ENCODE measurements at regions of chr4 and their contacts with region 1.

Region 1: DNA sequence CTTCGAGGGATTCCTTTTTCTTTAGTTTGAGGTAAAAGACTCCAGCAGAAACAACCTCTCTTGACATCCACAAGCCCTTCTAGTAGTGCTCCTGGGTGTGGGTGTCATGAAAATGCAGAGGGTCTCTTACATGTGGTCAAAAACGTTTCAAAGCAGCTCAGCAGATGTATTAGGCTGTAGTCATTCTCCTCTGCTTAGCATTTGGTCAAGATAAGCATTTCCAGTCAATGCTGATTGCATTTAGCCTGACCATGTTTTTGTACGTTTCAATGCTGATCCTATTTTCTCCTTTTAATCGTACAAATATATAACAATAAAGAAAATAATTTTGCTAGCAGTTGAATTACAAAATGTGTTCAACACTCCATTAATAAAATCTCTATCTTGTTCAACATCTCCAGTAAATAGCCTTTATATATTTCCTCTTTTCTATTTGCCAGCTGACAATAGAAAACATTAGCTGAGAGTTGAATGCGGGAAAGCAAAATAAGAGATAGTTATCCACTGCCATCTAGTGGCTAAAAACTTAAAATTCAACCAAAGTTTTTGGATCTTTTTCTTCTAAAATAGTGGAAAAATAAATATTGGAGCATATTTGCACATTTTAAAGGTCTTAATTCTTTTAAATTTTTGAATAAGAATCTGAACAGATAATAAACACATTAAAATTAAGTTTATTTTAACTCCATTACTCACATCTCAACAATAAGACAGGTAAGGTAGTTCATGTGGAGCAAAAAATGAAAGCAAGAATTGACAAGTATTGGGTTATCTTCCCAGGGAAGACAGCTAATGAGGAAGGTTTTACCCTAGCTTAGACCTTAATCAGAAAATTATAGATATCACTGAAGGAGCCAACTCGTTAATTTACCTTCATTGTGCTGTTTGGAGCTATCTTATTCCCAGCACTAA is 15.2 kb upstream of the PACRGL start:
- DNase-seq: no peak
- ATAC-seq: no peak
- H3K4me3 ChIP-seq: no peak overlapping the region
- H3K27ac ChIP-seq: no peak overlapping the region
- H3K4me1 ChIP-seq: no peaks in the 10 kb centered on the region
- H3K27me3 ChIP-seq: no peaks in the 10 kb centered on the region
- CTCF ChIP-seq: peak; percentile 42
- EP300 ChIP-seq: no peak
- POLR2A ChIP-seq: no peak
- RAD21 ChIP-seq: no peak

Region 2: DNA sequence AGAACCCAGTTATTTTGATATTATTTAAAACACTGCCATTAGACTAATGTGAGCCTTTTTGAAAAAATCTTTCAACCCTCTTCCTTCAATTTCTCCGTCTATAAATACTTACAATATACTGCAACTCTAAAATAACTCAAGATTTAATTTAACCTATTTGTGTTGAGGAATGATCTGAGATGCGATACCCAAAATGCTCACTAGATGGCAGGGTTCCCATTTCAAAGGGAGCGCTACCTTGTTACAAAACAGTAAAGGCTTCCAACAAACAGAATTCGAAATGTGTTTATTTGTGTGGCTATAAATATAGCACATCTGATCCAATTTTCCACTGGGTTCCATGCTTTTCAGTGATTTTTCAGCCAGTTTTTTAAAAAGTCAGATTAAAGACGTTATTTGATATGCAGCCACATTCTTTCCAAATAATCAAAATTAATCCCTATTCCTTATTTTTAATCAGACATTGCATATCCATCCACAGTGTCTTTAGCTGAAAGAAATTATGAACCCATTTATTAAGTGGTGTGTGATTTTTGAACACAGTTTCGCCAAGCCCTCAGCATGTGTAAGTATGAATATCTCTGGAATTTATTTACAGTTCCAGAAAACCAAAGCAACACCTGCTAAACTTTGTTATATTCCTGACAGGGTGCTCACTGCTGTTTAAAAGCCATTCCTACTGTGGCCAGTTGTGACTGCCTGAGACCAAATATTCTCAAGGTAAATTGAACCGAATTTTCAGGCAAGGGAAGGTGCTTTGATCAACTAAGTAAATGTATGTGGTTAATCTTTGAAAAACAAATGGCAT is 1995.6 kb before region 1 on chr4:
- CTCF ChIA-PET with region 1: interaction called, 4 read pairs
- POLR2A ChIA-PET with region 1: no interaction called
- in situ Hi-C with region 1: loop called (anchors 10 kb)
- intact Hi-C with region 1: no loop called
- DNase-seq: peak; percentile 16
- ATAC-seq: no peak; the same call in 2 of the 3 replicates
- H3K4me3 ChIP-seq: no peak overlapping the region
- H3K27ac ChIP-seq: no peak overlapping the region
- H3K4me1 ChIP-seq: peaks cover 13% of the 10 kb centered on the region; the same call in 1 of the 2 replicates
- H3K27me3 ChIP-seq: no peaks in the 10 kb centered on the region
- CTCF ChIP-seq: peak; percentile 71
- EP300 ChIP-seq: no peak
- POLR2A ChIP-seq: no peak
- RAD21 ChIP-seq: peak; percentile 45; the same call in 1 of the 2 replicates

Region 3: GRCh38 chr4:20313237-20314030 is 371.7 kb before region 1 on chr4:
- CTCF ChIA-PET with region 1: interaction called, 13 read pairs
- POLR2A ChIA-PET with region 1: no interaction called
- in situ Hi-C with region 1: loop called (anchors 25 kb)
- intact Hi-C with region 1: no loop called
- DNase-seq: peak; percentile 21
- ATAC-seq: peak; percentile 100
- H3K4me3 ChIP-seq: no peak overlapping the region
- H3K27ac ChIP-seq: no peak overlapping the region
- H3K4me1 ChIP-seq: no peaks in the 10 kb centered on the region
- H3K27me3 ChIP-seq: no peaks in the 10 kb centered on the region
- CTCF ChIP-seq: peak; percentile 69
- EP300 ChIP-seq: no peak
- POLR2A ChIP-seq: no peak
- RAD21 ChIP-seq: no peak

Region 4: DNA sequence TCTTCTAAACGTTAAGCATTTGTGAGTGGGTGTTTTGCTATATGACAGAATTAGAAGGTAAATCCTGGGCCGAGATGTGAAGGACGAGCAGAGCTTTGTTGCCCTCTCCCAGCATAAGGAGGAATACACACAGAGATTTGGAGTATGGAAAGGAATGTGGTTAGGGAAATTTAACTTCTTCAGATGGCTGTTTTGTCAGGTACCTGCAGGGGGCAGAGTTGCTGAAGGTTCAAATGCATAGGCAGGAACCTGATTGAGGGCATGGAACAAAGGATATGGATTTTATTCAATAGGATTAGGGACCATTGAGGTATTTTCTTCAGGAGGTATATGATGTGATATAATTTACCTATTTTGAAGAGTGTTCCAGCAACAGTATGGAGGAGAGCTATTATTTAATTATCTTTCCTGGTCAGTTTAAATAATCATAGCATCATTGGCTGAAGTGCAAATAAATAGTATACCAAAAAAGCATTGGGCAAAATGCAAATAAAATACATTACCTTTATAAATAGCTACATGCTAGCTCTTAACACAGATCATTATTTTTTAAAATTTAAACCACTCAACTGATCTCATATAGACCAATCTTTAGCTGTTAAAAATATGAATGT is 289.8 kb before region 1 on chr4:
- CTCF ChIA-PET with region 1: no interaction called
- POLR2A ChIA-PET with region 1: no interaction called
- in situ Hi-C with region 1: no loop called
- intact Hi-C with region 1: loop called (anchors 1 kb)
- DNase-seq: peak; percentile 32
- ATAC-seq: peak; percentile 68
- H3K4me3 ChIP-seq: no peak overlapping the region
- H3K27ac ChIP-seq: no peak overlapping the region
- H3K4me1 ChIP-seq: no peaks in the 10 kb centered on the region
- H3K27me3 ChIP-seq: no peaks in the 10 kb centered on the region
- CTCF ChIP-seq: peak; percentile 53
- EP300 ChIP-seq: no peak
- POLR2A ChIP-seq: no peak
- RAD21 ChIP-seq: no peak

Region 5: DNA sequence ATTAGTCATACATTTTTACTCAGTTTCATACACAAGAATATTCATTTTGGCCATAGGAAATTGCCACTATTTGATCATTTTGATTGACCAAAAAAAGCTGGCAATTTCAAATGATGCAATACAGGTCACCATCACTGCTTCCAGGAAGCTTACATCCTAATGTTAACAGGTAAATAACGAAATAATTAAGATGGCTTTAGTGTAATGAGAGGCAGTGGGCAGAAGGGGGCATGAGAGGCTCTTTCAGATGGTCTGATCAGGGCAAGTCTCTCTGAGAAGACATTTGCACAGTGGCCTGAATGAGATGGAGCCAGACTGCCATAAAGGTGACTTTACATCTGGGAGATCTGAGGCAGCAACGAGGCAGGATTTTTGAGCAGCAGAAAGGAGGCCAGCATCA is 262.7 kb before region 1 on chr4:
- CTCF ChIA-PET with region 1: interaction called, 15 read pairs
- POLR2A ChIA-PET with region 1: no interaction called
- in situ Hi-C with region 1: loop called (anchors 5 kb)
- intact Hi-C with region 1: loop called (anchors 1 kb)
- DNase-seq: peak; percentile 25
- ATAC-seq: peak; percentile 91
- H3K4me3 ChIP-seq: no peak overlapping the region
- H3K27ac ChIP-seq: no peak overlapping the region
- H3K4me1 ChIP-seq: no peaks in the 10 kb centered on the region
- H3K27me3 ChIP-seq: no peaks in the 10 kb centered on the region
- CTCF ChIP-seq: peak; percentile 67
- EP300 ChIP-seq: no peak
- POLR2A ChIP-seq: no peak
- RAD21 ChIP-seq: no peak

Region 6: DNA sequence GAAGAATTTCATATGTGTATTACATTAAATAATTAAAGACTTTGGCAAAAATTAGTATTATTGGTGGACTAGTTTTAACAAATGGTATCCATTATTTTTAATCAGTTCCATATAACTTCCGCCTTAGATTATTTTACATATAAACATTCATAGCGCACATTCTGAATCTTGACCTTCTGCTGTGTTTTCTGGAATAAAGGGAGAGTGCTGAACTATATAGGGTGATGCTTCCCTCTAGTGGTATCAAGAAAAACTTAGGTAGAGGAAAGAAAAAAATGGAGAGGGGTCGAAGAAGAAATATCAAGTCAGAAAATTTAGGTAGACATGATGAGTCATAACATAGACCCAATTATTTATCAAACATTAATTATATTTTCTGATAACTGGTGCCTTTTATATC is 140.5 kb before region 1 on chr4:
- CTCF ChIA-PET with region 1: no interaction called
- POLR2A ChIA-PET with region 1: no interaction called
- in situ Hi-C with region 1: no loop called
- intact Hi-C with region 1: loop called (anchors 10 kb)
- DNase-seq: peak; percentile 14
- ATAC-seq: peak; percentile 54; the same call in 2 of the 3 replicates
- H3K4me3 ChIP-seq: no peak overlapping the region
- H3K27ac ChIP-seq: no peak overlapping the region
- H3K4me1 ChIP-seq: no peaks in the 10 kb centered on the region
- H3K27me3 ChIP-seq: no peaks in the 10 kb centered on the region
- CTCF ChIP-seq: peak; percentile 48
- EP300 ChIP-seq: no peak
- POLR2A ChIP-seq: no peak
- RAD21 ChIP-seq: no peak